K562 (cell line): ENCODE measurements at regions of chr2 and their contacts with region 1.

Region 1: DNA sequence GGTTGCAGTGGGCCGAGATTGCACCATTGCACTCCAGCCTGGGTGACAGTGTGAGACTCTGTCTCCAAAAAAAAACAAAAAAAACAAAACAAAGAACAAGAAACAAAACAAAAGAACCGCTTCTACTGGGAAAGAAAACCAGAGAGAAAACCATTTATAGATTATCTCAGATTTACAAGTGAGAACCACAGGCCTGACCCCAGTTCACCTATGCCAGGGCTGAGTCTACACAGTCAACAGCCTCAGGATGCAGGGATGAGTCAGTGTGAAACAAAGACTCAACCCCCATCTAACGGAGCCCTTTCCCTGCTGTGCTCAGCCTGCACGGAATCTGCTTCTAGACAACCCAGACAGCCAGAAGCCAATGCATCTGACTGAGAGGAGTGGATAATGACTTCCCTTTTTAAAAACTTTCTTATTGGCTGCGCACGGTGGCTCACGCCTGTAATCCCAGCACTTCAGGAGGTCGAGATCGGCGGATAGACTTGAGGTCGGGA is 25.5 kb upstream of the YWHAQ start:
- DNase-seq: peak in 2 of 4 experiments; percentile 52 to 60
- ATAC-seq: peak; percentile 64
- H3K4me3 ChIP-seq: no peak overlapping the region
- H3K27ac ChIP-seq: no peak overlapping the region
- H3K4me1 ChIP-seq: peaks cover 15 to 19% of the 10 kb centered on the region in 2 experiments; a peak in 3 of 5 replicates
- H3K27me3 ChIP-seq: peaks cover 0 to 19% of the 10 kb centered on the region in 2 experiments; a peak in 2 of 5 replicates
- CTCF ChIP-seq: no peak
- EP300 ChIP-seq: peak; percentile 32; the same call in 1 of the 2 replicates
- POLR2A ChIP-seq: no peak
- RAD21 ChIP-seq: no peak

Region 2: DNA sequence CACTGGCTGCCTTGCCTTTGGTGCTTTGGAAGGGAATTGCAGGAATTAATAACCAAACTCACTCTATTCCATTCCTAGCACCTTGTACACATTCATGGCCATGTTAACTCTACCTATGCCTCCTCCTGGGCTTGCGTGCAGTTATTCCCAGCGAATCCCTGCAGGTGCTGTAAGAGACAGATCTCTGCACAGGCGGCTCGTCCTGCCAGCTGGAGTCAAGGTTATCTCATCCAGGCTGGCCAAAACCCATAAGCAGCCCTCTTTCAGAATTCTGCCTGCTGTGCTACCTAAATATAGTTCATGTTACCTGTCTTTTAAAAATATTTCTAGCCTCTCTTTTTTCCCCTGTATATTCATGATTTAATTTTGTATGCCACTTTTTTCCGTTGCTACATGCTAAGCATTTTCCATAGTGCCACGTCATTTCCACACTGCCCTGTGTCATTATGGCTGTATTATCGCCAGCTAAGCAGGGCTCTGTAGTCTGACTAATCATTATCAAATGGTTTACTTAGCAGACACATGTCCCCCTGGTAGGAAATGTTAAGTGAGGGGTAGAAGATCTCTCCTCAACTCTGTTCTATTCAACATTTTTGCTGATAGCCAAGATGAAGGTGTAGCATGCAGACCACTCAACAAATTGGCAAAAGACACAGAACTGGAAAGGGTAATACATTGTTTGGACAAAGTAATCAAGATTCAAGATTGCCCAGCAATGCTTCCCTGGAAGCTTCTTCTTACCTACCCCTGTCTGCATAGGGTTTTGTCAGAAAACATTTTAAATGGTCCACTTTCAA is 107.2 kb after region 1 on chr2:
- CTCF ChIA-PET with region 1: no interaction called
- POLR2A ChIA-PET with region 1: no interaction called
- in situ Hi-C with region 1: no loop called
- intact Hi-C with region 1: loop called (anchors 5 kb)
- DNase-seq: peak in 2 of 4 experiments; percentile 64 to 65
- ATAC-seq: peak; percentile 44
- H3K4me3 ChIP-seq: no peak overlapping the region
- H3K27ac ChIP-seq: peak overlapping the region; percentile 48; the same call in 2 of the 3 replicates
- H3K4me1 ChIP-seq: peaks cover 31 to 46% of the 10 kb centered on the region in 2 experiments
- H3K27me3 ChIP-seq: no peaks in the 10 kb centered on the region
- CTCF ChIP-seq: no peak
- EP300 ChIP-seq: peak; percentile 65; the same call in 1 of the 2 replicates
- POLR2A ChIP-seq: no peak
- RAD21 ChIP-seq: no peak